PC-3 (cell line): ENCODE measurements at regions of chr3 and their contacts with region 1.

Region 1: DNA sequence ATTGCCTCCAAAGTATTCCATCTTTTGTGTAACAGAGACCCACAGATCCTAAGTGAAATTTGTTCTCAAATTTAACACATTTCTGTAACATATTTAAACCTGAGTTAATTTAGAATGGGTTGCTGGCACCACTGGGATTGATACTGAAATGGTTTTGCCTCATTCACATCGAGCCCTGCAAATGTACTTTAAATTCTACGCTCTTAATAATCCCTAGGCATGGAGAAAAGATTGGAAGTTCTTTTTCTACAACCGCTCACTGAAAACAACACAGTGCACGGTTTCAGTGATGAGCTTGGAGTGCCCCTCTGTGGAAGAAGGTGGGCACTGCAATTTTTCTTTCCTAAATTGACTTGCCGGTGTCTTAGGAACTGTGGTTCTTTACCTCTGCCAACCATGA is 109.9 kb upstream of the ATP11B start:
- DNase-seq: peak; percentile 93
- ATAC-seq: peak; percentile 82
- H3K4me3 ChIP-seq: peak overlapping the region; percentile 80
- H3K27ac ChIP-seq: no peak overlapping the region
- H3K4me1 ChIP-seq: peaks cover 13% of the 10 kb centered on the region; the same call in 1 of the 2 replicates
- H3K27me3 ChIP-seq: peaks cover 35% of the 10 kb centered on the region
- CTCF ChIP-seq: peak; percentile 97

Region 2: DNA sequence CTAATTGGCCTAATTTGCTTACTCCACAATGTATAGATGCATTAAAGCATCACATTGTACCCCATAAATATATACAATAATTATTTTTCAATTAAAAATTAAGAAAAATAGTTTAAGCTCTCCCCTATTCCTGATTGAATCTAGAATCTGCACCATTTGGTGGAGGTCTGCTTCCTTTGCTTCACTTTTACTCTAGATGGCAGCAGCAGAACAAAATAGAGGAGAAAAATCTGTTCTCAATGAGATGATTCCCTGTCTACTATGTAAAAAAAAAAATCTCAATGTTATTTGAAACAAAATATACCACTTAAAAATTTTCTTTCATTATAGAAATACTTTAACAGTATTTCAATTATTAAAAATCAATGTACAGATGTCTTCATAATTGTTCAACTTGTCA is 1880.6 kb before region 1 on chr3:
- CTCF ChIA-PET with region 1: no interaction called
- POLR2A ChIA-PET with region 1: no interaction called
- intact Hi-C with region 1: loop called (anchors 10 kb)
- DNase-seq: peak; percentile 52
- ATAC-seq: peak; percentile 72
- H3K4me3 ChIP-seq: no peak overlapping the region
- H3K27ac ChIP-seq: no peak overlapping the region
- H3K4me1 ChIP-seq: no peaks in the 10 kb centered on the region
- H3K27me3 ChIP-seq: peaks cover 21% of the 10 kb centered on the region
- CTCF ChIP-seq: peak; percentile 60

Region 3: DNA sequence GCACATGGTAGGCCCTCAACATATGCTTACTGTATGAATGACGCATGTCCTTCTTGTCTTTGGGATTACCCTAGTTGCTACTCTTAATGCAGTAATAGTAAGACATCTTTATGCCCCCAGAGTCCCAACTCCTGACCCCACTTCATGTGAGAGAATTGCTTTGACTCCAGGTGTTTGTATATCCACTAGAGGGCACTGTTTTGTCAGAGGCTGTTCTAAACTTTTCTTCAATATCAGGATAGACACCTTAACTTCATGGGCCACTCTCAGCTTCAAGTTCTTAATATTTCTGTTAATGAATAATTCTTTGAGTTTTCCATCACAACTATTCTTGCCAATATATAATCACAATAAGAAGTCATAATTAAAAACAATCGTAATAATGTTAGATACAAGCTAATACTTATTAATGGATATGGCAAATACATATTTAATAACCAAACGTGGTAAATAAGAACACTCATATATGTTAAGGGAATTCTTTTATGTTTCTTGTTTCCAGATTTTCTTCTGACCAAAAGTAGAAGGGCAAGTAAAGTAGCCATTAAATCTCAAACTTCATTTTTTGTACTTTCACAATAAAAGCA is 1356.7 kb before region 1 on chr3:
- CTCF ChIA-PET with region 1: no interaction called
- POLR2A ChIA-PET with region 1: no interaction called
- intact Hi-C with region 1: loop called (anchors 2 kb)
- DNase-seq: peak; percentile 51
- ATAC-seq: no peak
- H3K4me3 ChIP-seq: no peak overlapping the region
- H3K27ac ChIP-seq: no peak overlapping the region
- H3K4me1 ChIP-seq: no peaks in the 10 kb centered on the region
- H3K27me3 ChIP-seq: 0 out of 2 replicates have a peak, but pooled peaks cover 8% of the 10 kb centered on the region
- CTCF ChIP-seq: peak; percentile 84

Region 4: GRCh38 chr3:182248351-182248880 is 435.0 kb before region 1 on chr3:
- CTCF ChIA-PET with region 1: no interaction called
- POLR2A ChIA-PET with region 1: no interaction called
- intact Hi-C with region 1: loop called (anchors 2 kb)
- DNase-seq: peak; percentile 56
- ATAC-seq: peak; percentile 79
- H3K4me3 ChIP-seq: no peak overlapping the region
- H3K27ac ChIP-seq: no peak overlapping the region
- H3K4me1 ChIP-seq: no peaks in the 10 kb centered on the region
- H3K27me3 ChIP-seq: no peaks in the 10 kb centered on the region
- CTCF ChIP-seq: peak; percentile 54

Region 5: DNA sequence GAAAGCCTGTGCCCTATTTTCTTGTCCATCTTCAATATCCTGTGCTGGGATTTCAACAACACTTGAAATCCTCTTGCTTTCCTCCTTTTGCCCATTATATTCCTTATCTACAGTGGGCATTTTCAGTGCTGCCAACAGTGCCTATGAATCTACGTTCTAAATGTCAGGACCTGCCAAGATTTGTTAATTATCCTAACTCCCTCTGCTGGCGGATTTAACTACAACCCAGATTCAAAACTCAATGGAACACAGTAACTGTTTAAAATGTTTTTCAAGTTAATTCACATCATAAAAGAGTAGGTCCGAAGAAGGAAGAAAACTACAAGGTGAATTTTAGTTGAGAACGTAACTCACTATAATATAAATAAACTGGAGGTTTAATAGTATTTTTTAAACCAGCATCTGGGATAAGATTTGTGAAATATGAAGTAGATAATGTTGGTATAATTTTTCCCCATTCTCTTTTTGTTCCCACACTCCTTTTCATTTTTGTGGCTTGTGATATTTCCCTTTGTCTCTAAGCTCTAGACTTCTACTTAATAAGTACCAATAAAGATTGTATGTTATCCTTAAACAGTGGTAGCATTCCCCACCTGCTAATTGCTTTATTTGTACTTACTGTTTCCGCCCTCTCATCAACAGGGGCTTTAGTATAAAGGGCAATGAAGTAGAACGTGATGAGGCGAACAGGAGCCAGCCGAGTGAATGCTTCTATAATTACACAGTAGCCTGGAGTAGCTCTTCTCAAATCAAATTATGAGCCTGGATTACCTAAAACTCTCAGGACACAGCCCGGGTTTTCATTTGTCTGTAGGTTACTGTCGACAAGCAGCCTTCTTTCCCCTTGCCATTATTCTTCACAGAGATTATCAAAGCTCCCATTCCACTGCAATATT is 192.6 kb before region 1 on chr3:
- CTCF ChIA-PET with region 1: no interaction called
- POLR2A ChIA-PET with region 1: no interaction called
- intact Hi-C with region 1: loop called (anchors 1 kb)
- DNase-seq: peak; percentile 66
- ATAC-seq: peak; percentile 71
- H3K4me3 ChIP-seq: no peak overlapping the region
- H3K27ac ChIP-seq: no peak overlapping the region
- H3K4me1 ChIP-seq: peaks cover 9% of the 10 kb centered on the region; the same call in 1 of the 2 replicates
- H3K27me3 ChIP-seq: no peaks in the 10 kb centered on the region
- CTCF ChIP-seq: peak; percentile 84